Naive thymus-derived CD4-positive, alpha-beta T cell (primary cell): ENCODE measurements at regions of chr1 and their contacts with region 1.

Region 1: GRCh38 chr1:179025125-179025974 is at the start of gene FAM20B:
- DNase-seq: peak; percentile 80 to 89 (median 86)
- ATAC-seq: peak; percentile 95
- H3K4me3 ChIP-seq: peak within 1 kb of the TSS; percentile 71
- H3K4me3 Mint-ChIP-seq: peak within 1 kb of the TSS; percentile 87 to 98 (median 91)
- H3K27ac ChIP-seq: peak within 1 kb of the TSS; percentile 84
- H3K27ac Mint-ChIP-seq: peak within 1 kb of the TSS; percentile 86 to 92 (median 89)
- H3K4me1 ChIP-seq: peaks cover 10 to 17% of the 10 kb centered on the region in 2 donors
- H3K4me1 Mint-ChIP-seq: peaks cover 35 to 60% (median 50%) of the 10 kb centered on the region in 7 donors
- H3K27me3 ChIP-seq: no peaks in the 10 kb centered on the region
- H3K27me3 Mint-ChIP-seq: peaks cover 0 to 31% (median 0%) of the 10 kb centered on the region in 5 donors
- total RNA-seq, gene FAM20B: 14.3 to 27.9 (median 25.2) TPM

Region 2: GRCh38 chr1:178397678-178398077 is 627.7 kb before region 1 on chr1:
- CTCF ChIA-PET with region 1: no interaction called
- POLR2A ChIA-PET with region 1: no interaction called
- intact Hi-C with region 1: no loop called
- DNase-seq: no peak
- ATAC-seq: no peak
- H3K4me3 ChIP-seq: no peak overlapping the region
- H3K4me3 Mint-ChIP-seq: no peak overlapping the region
- H3K27ac ChIP-seq: no peak overlapping the region
- H3K27ac Mint-ChIP-seq: no peak overlapping the region
- H3K4me1 ChIP-seq: no peaks in the 10 kb centered on the region
- H3K4me1 Mint-ChIP-seq: no peaks in the 10 kb centered on the region
- H3K27me3 ChIP-seq: no peaks in the 10 kb centered on the region
- H3K27me3 Mint-ChIP-seq: peaks cover 0 to 5% (median 0%) of the 10 kb centered on the region in 5 donors

Region 3: DNA sequence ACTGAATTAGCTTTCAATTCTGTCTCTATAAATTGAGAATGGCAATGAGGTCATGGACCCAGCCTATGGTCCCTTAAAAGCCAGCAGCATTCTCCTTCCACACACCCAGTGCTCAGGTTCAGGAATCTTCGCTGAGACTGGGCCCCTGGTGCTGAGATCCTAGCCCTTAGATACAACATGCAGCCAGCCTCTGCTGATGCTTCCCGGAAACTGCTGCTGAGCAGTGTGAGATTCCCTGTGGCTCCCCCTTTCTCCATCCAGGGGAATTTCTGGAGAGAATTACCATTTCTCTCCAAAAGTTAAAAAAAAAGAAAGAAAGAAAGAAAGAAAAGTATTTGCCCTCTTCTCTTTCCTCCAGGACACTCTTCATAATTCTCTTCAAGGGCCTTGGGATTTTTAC is 332.0 kb before region 1 on chr1:
- CTCF ChIA-PET with region 1: no interaction called
- POLR2A ChIA-PET with region 1: no interaction called
- intact Hi-C with region 1: no loop called
- DNase-seq: no peak
- ATAC-seq: no peak
- H3K4me3 ChIP-seq: no peak overlapping the region
- H3K4me3 Mint-ChIP-seq: no peak overlapping the region
- H3K27ac ChIP-seq: no peak overlapping the region
- H3K27ac Mint-ChIP-seq: no peak overlapping the region
- H3K4me1 ChIP-seq: no peaks in the 10 kb centered on the region
- H3K4me1 Mint-ChIP-seq: no peaks in the 10 kb centered on the region
- H3K27me3 ChIP-seq: no peaks in the 10 kb centered on the region
- H3K27me3 Mint-ChIP-seq: peaks cover 0 to 7% (median 0%) of the 10 kb centered on the region in 5 donors

Region 4: GRCh38 chr1:179002552-179003345 is 22.6 kb before region 1 on chr1:
- CTCF ChIA-PET with region 1: interaction called, 6 read pairs
- POLR2A ChIA-PET with region 1: interaction called, 3 read pairs
- intact Hi-C with region 1: loop called in 1 of 2 experiments (anchors 2 kb)
- DNase-seq: peak; percentile 32 to 70 (median 50)
- ATAC-seq: peak; percentile 82
- H3K4me3 ChIP-seq: no peak overlapping the region
- H3K4me3 Mint-ChIP-seq: peak overlapping the region in 5 of 10 donors; percentile 1 to 59 (median 34)
- H3K27ac ChIP-seq: no peak overlapping the region
- H3K27ac Mint-ChIP-seq: peak overlapping the region in 7 of 9 donors; percentile 1 to 90 (median 49)
- H3K4me1 ChIP-seq: peaks cover 18 to 23% of the 10 kb centered on the region in 2 donors
- H3K4me1 Mint-ChIP-seq: peaks cover 10 to 23% (median 17%) of the 10 kb centered on the region in 7 donors
- H3K27me3 ChIP-seq: no peaks in the 10 kb centered on the region
- H3K27me3 Mint-ChIP-seq: peaks cover 0 to 2% (median 0%) of the 10 kb centered on the region in 5 donors

Region 5: GRCh38 chr1:179052776-179053175 is 27.4 kb after region 1 on chr1:
- CTCF ChIA-PET with region 1: no interaction called
- POLR2A ChIA-PET with region 1: no interaction called
- intact Hi-C with region 1: no loop called
- DNase-seq: no peak
- ATAC-seq: no peak
- H3K4me3 ChIP-seq: no peak overlapping the region
- H3K4me3 Mint-ChIP-seq: no peak overlapping the region
- H3K27ac ChIP-seq: no peak overlapping the region
- H3K27ac Mint-ChIP-seq: no peak overlapping the region
- H3K4me1 ChIP-seq: no peaks in the 10 kb centered on the region
- H3K4me1 Mint-ChIP-seq: peaks cover 0 to 6% (median under 1%) of the 10 kb centered on the region in 7 donors
- H3K27me3 ChIP-seq: no peaks in the 10 kb centered on the region
- H3K27me3 Mint-ChIP-seq: no peaks in the 10 kb centered on the region

Region 6: DNA sequence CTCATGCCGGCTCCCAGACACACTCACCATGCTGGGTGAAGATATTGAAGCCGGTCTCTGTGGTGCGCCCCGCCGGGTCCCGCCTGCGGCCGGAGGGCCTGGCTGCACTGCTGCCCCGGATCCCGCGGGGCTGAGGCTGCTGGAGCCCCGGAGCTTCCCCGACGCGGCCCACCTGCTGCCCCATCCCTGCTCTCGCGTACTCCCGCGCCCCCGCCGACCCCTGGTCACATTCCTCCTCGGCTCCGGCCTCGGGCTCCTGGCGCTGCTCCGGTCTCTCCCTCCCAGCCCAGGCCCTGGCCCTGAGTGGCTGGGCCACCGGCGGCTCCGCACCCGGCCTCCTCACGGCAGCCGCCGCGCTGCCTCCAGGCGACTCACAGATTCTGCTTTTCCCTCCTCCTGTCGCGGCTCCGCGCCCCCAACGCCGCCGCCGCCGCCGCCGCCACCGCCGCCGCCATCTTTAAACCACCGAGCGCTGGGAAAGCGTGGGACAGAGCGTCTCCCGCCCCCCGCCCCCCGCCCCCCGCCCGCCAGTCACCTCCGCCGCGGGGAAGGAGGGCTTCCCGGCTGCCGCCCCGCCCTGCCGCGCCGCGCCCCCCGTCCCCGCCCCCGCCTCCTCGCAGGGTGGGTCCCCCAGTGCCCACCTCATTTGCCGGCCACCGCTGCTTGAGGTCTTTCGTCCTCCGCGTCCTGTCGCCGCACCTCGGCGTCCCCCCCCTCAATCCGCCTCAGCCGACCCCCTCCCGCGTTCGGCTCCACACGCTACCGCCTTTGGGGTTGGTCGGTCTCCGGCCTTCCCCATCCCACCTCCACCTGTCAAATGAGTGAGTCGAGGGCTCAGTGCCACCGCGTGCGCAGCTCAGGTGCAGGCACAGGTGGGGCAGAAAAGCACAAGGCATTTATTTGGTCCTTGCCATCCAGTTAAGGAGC is 204.1 kb after region 1 on chr1 and contains the start of gene ABL2:
- CTCF ChIA-PET with region 1: no interaction called
- POLR2A ChIA-PET with region 1: no interaction called
- intact Hi-C with region 1: loop called (anchors 2 kb)
- DNase-seq: peak; percentile 20 to 73 (median 41)
- ATAC-seq: peak; percentile 77
- H3K4me3 ChIP-seq: peak within 1 kb of the TSS; percentile 66
- H3K4me3 Mint-ChIP-seq: peak within 1 kb of the TSS; percentile 85 to 97 (median 92)
- H3K27ac ChIP-seq: peak within 1 kb of the TSS; percentile 81
- H3K27ac Mint-ChIP-seq: peak within 1 kb of the TSS; percentile 81 to 95 (median 89)
- H3K4me1 ChIP-seq: peaks cover 0 to 14% of the 10 kb centered on the region in 2 donors
- H3K4me1 Mint-ChIP-seq: peaks cover 20 to 43% (median 39%) of the 10 kb centered on the region in 7 donors
- H3K27me3 ChIP-seq: no peaks in the 10 kb centered on the region
- H3K27me3 Mint-ChIP-seq: peaks cover 0 to 5% (median 0%) of the 10 kb centered on the region in 5 donors
- total RNA-seq, gene ABL2: 10.3 to 20.1 (median 18.6) TPM

Region 7: DNA sequence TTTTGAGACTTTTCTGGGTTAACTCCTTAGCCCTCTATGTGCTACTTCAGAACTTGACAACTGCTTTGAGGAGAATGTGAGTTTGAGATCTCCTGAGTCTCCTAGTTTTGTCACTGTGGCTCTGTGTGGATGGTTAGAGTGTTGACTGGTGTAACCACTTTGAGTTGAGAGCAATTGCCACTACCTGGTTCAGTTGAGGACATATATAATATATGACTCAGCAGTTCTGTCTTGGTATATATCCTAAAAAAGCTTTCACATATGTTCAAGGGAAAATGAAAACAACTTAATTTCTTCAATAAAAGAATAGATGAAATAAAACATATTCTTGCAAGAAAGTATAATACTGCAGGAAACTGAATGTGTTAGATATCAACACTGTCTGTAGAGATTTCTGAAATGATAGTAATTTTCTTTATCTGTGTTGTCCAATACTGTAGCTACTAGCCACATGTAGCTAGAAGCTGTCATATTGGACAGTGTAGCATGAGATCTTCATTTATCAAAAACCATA is 1032.6 kb after region 1 on chr1:
- CTCF ChIA-PET with region 1: no interaction called
- POLR2A ChIA-PET with region 1: no interaction called
- intact Hi-C with region 1: no loop called
- DNase-seq: no peak
- ATAC-seq: no peak
- H3K4me3 ChIP-seq: no peak overlapping the region
- H3K4me3 Mint-ChIP-seq: no peak overlapping the region
- H3K27ac ChIP-seq: no peak overlapping the region
- H3K27ac Mint-ChIP-seq: no peak overlapping the region
- H3K4me1 ChIP-seq: no peaks in the 10 kb centered on the region
- H3K4me1 Mint-ChIP-seq: peaks cover 0 to 6% (median 0%) of the 10 kb centered on the region in 7 donors
- H3K27me3 ChIP-seq: no peaks in the 10 kb centered on the region
- H3K27me3 Mint-ChIP-seq: no peaks in the 10 kb centered on the region

Region 8: GRCh38 chr1:180154325-180155181 is 1129.2 kb after region 1 on chr1 and contains the start of gene QSOX1:
- CTCF ChIA-PET with region 1: no interaction called
- POLR2A ChIA-PET with region 1: no interaction called
- intact Hi-C with region 1: loop called (anchors 5 to 10 kb)
- DNase-seq: peak; percentile 81 to 89 (median 86)
- ATAC-seq: peak; percentile 97
- H3K4me3 ChIP-seq: peak within 1 kb of the TSS; percentile 94
- H3K4me3 Mint-ChIP-seq: peak within 1 kb of the TSS; percentile 80 to 99 (median 91)
- H3K27ac ChIP-seq: peak within 1 kb of the TSS; percentile 78
- H3K27ac Mint-ChIP-seq: peak within 1 kb of the TSS; percentile 81 to 95 (median 86)
- H3K4me1 ChIP-seq: peaks cover 7 to 20% of the 10 kb centered on the region in 2 donors
- H3K4me1 Mint-ChIP-seq: peaks cover 24 to 45% (median 37%) of the 10 kb centered on the region in 7 donors
- H3K27me3 ChIP-seq: no peaks in the 10 kb centered on the region
- H3K27me3 Mint-ChIP-seq: no peaks in the 10 kb centered on the region
- total RNA-seq, gene QSOX1: 22.1 to 55.6 (median 25.6) TPM